Ascending aorta (tissue), 2 donors: ENCODE measurements at regions of chr7 and their contacts with region 1.

Region 1: DNA sequence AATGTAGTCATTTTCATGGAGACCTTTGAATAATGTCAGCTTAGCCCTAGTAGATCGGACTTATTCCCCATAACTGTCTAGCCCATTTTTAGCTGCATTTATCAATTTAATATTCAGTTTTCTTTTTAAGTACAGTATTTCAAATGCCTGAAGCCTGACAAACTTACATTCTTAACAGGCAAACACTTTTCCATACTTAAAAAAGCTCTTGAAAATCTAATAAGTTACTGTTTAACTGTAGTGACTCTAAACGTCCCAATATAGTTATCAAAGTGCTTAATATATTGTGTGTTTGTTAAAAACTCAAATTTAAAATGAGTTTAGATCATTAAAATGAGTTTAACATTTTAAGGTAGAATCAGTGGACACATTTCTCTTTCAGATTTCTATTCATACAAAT is 44.9 kb downstream of the PON1 start:
- DNase-seq: no peak
- H3K4me3 ChIP-seq: no peak overlapping the region
- H3K27ac ChIP-seq: no peak overlapping the region
- H3K4me1 ChIP-seq: no peaks in the 10 kb centered on the region
- H3K27me3 ChIP-seq: no peaks in the 10 kb centered on the region
- CTCF ChIP-seq: no peak

Region 2: GRCh38 chr7:94701555-94701973 is 577.9 kb before region 1 on chr7:
- intact Hi-C with region 1: no loop called
- DNase-seq: no peak
- H3K4me3 ChIP-seq: no peak overlapping the region
- H3K27ac ChIP-seq: no peak overlapping the region
- H3K4me1 ChIP-seq: peaks cover 0 to 3% of the 10 kb centered on the region in 2 donors
- H3K27me3 ChIP-seq: no peaks in the 10 kb centered on the region
- CTCF ChIP-seq: no peak

Region 3: GRCh38 chr7:95295399-95295798 is 16.0 kb after region 1 on chr7:
- intact Hi-C with region 1: loop called (anchors 1 kb)
- DNase-seq: no peak
- H3K4me3 ChIP-seq: no peak overlapping the region
- H3K27ac ChIP-seq: no peak overlapping the region
- H3K4me1 ChIP-seq: no peaks in the 10 kb centered on the region
- H3K27me3 ChIP-seq: no peaks in the 10 kb centered on the region
- CTCF ChIP-seq: no peak

Region 4: DNA sequence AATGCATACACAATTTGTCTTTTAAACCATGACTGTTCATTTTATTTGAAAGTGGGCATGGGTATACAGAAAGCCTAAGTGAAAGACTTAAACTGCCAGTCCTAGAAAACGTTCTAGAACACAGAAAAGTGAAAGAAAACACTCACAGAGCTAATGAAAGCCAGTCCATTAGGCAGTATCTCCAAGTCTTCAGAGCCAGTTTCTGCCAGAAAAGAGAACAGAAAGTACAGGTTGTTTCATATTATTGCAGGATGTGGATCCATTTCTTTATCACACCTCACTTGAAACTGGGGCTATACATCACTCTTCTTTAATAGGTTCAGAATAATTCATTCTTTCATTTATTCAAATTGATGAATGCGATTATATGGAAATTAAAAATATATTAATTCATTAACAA is 37.2 kb after region 1 on chr7:
- intact Hi-C with region 1: no loop called
- DNase-seq: no peak
- H3K4me3 ChIP-seq: no peak overlapping the region
- H3K27ac ChIP-seq: no peak overlapping the region
- H3K4me1 ChIP-seq: no peaks in the 10 kb centered on the region
- H3K27me3 ChIP-seq: no peaks in the 10 kb centered on the region
- CTCF ChIP-seq: no peak